Ascending aorta (tissue), 2 donors: ENCODE measurements at regions of chr1 and their contacts with region 1.

Region 1: GRCh38 chr1:54273092-54273794 is 73.3 kb downstream of the MRPL37 start:
- DNase-seq: peak; percentile 53 to 93
- H3K4me3 ChIP-seq: peak overlapping the region in 1 of 2 donors; percentile 35
- H3K27ac ChIP-seq: peak overlapping the region; percentile 96 to 98
- H3K4me1 ChIP-seq: peaks cover 34 to 55% of the 10 kb centered on the region in 2 donors
- H3K27me3 ChIP-seq: no peaks in the 10 kb centered on the region
- CTCF ChIP-seq: peak; percentile 77 to 84 (median 83)

Region 2: DNA sequence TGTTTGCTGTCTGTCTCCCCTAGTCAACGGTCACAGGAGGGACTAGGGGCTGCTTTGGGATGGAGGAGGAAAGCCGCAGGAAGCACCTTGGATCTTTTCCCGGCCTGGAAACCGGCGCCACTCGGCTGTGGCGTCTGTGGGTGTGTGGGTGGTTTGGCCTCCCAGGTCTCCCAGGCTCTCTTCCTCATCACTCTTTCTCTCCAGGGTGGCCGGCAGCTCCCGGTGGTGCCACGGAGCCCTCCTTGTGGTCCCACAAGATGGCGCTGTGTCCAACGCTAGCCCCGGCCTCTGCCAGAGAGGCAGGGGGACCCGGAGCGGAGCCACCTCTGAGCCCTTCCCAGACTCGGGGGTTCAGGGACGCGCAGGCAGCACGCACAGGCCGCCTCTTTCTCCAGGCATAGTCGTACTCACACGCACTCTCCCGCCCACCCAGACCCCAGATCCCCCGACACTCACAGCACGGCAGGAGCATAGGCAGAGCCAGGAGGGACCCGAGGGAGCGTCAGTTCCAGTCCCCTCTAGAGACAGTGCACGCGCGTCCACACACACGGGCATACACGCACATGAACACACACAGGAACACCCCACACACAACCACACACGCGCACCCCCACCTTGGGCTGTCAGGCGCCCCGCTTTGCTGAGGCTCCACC is 151.6 kb before region 1 on chr1:
- intact Hi-C with region 1: loop called (anchors 5 kb)
- DNase-seq: peak in 1 of 2 donors; percentile 87
- H3K4me3 ChIP-seq: peak overlapping the region; percentile 25 to 60
- H3K27ac ChIP-seq: no peak overlapping the region
- H3K4me1 ChIP-seq: peaks cover 0 to 3% of the 10 kb centered on the region in 2 donors
- H3K27me3 ChIP-seq: no peaks in the 10 kb centered on the region
- CTCF ChIP-seq: peak; percentile 68 to 85 (median 81)

Region 3: DNA sequence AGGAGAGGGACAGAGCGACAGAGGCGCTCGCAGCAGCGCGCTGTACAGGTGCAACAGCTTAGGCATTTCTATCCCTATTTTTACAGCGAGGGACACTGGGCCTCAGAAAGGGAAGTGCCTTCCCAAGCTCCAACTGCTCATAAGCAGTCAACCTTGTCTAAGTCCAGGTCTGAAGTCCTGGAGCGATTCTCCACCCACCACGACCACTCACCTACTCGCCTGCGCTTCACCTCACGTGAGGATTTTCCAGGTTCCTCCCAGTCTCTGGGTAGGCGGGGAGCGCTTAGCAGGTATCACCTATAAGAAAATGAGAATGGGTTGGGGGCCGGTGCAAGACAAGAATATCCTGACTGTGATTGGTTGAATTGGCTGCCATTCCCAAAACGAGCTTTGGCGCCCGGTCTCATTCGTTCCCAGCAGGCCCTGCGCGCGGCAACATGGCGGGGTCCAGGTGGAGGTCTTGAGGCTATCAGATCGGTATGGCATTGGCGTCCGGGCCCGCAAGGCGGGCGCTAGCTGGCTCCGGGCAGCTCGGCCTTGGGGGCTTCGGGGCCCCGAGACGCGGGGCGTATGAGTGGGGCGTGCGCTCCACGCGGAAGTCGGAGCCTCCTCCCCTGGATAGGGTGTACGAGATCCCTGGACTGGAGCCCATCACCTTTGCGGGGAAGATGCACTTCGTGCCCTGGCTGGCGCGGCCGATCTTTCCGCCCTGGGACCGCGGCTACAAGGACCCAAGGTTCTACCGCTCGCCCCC is 73.3 kb before region 1 on chr1 and contains the starts of genes CYB5RL and MRPL37:
- intact Hi-C with region 1: loop called (anchors 1 kb)
- DNase-seq: peak; percentile 74 to 96
- H3K4me3 ChIP-seq: peak within 1 kb of the TSS; percentile 73 to 75
- H3K27ac ChIP-seq: peak within 1 kb of the TSS; percentile 44 to 68
- H3K4me1 ChIP-seq: peaks cover 0 to 16% of the 10 kb centered on the region in 2 donors
- H3K27me3 ChIP-seq: no peaks in the 10 kb centered on the region
- CTCF ChIP-seq: no peak
- total RNA-seq, gene CYB5RL: 5.1 TPM
- total RNA-seq, gene MRPL37: 51.2 TPM

Region 4: GRCh38 chr1:54227091-54227602 is 46.1 kb before region 1 on chr1:
- intact Hi-C with region 1: loop called (anchors 5 kb)
- DNase-seq: peak; percentile 38 to 80
- H3K4me3 ChIP-seq: no peak overlapping the region
- H3K27ac ChIP-seq: peak overlapping the region; percentile 41 to 56
- H3K4me1 ChIP-seq: peaks cover 0 to 8% of the 10 kb centered on the region in 2 donors
- H3K27me3 ChIP-seq: no peaks in the 10 kb centered on the region
- CTCF ChIP-seq: no peak

Region 5: GRCh38 chr1:54287176-54287650 is 14.0 kb after region 1 on chr1:
- intact Hi-C with region 1: loop called (anchors 1 kb)
- DNase-seq: peak; percentile 86 to 95
- H3K4me3 ChIP-seq: no peak overlapping the region
- H3K27ac ChIP-seq: peak overlapping the region; percentile 85 to 95
- H3K4me1 ChIP-seq: peaks cover 28 to 74% of the 10 kb centered on the region in 2 donors
- H3K27me3 ChIP-seq: no peaks in the 10 kb centered on the region
- CTCF ChIP-seq: no peak

Region 6: GRCh38 chr1:54340878-54341277 is 67.6 kb after region 1 on chr1:
- intact Hi-C with region 1: loop called (anchors 2 kb)
- DNase-seq: no peak
- H3K4me3 ChIP-seq: no peak overlapping the region
- H3K27ac ChIP-seq: peak overlapping the region; percentile 74 to 76
- H3K4me1 ChIP-seq: peaks cover under 1 to 14% of the 10 kb centered on the region in 2 donors
- H3K27me3 ChIP-seq: no peaks in the 10 kb centered on the region
- CTCF ChIP-seq: no peak

Region 7: DNA sequence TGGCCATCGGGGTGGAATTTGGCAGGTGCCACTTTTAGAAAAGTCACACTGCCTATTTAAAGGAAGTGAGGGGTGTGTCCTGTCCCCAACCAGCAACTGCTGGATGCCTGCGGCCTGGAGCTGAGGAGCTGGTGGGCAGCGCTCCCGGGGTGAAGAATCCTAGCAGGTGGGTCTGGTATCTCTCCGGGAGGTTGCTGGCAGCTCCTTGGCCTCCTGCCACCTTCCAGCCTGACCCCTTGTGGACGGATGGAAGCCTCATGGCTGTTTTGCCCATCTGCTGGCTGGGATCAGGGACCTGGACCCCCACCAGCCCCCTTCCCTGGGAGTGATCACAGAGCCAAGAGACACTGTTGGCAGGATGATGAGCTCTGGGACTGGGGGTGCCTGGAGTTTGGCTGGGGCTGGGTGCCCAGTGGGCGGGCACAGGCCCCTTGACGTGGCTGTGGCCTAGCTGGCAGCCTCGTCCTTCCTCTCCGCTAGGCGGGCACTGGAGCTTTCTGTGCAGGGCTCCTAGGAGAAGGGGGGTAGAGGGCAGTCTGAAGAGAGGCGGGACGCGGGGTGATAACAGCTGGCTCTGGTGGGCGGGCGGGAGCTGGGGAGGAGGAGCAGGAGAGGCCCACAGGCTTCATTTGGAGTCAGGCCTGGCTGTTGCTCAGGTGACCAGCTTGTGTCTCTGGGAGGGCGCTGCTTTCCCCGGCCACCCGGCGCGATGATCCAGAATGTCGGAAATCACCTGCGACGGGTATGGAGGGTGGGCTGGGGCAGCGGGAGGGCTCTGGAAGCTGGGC is 274.6 kb after region 1 on chr1 and contains the start of gene ACOT11:
- intact Hi-C with region 1: loop called (anchors 5 kb)
- DNase-seq: peak; percentile 69 to 94
- H3K4me3 ChIP-seq: peak within 1 kb of the TSS; percentile 44 to 59
- H3K27ac ChIP-seq: peak within 1 kb of the TSS; percentile 83 to 92
- H3K4me1 ChIP-seq: peaks cover 18 to 20% of the 10 kb centered on the region in 2 donors
- H3K27me3 ChIP-seq: no peaks in the 10 kb centered on the region
- CTCF ChIP-seq: peak; percentile 58 to 73 (median 70)
- total RNA-seq, gene ACOT11: 30.4 TPM